Calu3 (cell line): ENCODE measurements at regions of chr7 and their contacts with region 1.

Region 1: GRCh38 chr7:30510124-30511075 is 5.8 kb upstream of the GGCT start:
- DNase-seq: peak; percentile 63
- H3K4me3 Mint-ChIP-seq: peak overlapping the region; percentile 59
- H3K27ac Mint-ChIP-seq: peak overlapping the region; percentile 68
- H3K4me1 Mint-ChIP-seq: peaks cover 23% of the 10 kb centered on the region
- H3K27me3 Mint-ChIP-seq: no peaks in the 10 kb centered on the region
- CTCF ChIP-seq: peak; percentile 85

Region 2: GRCh38 chr7:30548762-30549344 is 38.5 kb after region 1 on chr7:
- CTCF ChIA-PET with region 1: interaction called, 6 read pairs
- intact Hi-C with region 1: loop called (anchors 2 kb)
- DNase-seq: peak; percentile 86
- H3K4me3 Mint-ChIP-seq: no peak overlapping the region
- H3K27ac Mint-ChIP-seq: no peak overlapping the region
- H3K4me1 Mint-ChIP-seq: peaks cover 39% of the 10 kb centered on the region
- H3K27me3 Mint-ChIP-seq: no peaks in the 10 kb centered on the region
- CTCF ChIP-seq: peak; percentile 91